ENCODE measurements at regions of chr19 and their contacts with region 1.

Region 1: DNA sequence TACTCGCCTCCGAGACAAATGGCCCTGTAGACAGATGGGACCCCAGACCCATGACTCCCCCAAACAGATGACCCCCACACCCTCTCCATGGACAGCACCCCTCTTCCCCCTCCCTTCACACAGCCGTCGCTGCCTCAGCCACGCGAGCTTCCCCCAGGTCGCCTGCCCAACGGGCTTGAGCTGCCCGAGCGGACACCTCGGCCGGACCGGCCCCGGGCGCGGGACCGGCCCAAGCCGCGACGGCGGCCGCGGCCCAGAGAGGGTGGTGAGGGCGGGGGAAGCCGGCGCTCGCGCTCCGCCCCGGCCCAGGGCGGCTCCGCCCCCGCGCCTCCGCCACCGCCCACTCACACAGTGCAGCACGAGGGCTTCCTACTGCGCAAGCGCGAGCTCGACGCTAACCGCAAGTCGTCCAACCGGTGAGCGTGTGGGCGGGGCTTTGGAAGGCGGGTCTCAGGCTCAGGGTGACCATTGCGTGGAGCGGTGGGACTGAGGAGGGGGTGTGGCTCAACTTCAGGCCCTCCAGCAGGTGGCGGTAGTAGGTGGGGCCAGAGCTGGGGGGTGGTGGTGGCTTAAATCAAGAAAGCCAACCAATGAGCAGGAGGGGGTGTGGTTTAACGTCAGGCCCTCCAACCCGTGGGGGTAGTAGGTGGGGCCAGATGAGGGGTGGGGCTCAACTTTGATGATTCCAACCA is 6.2 kb upstream of the SHKBP1 start:
- DNase-seq: peak; percentile 86 to 100 (median 94)
- ATAC-seq: peak; percentile 93
- H3K4me3 ChIP-seq: peak overlapping the region; percentile 34 to 51
- H3K4me3 Mint-ChIP-seq: peak overlapping the region; percentile 72
- H3K27ac ChIP-seq: peak overlapping the region in 1 of 2 experiments; percentile 56
- H3K27ac Mint-ChIP-seq: peak overlapping the region; percentile 67
- H3K4me1 ChIP-seq: peaks cover 18% of the 10 kb centered on the region
- H3K4me1 Mint-ChIP-seq: peaks cover 13% of the 10 kb centered on the region
- H3K27me3 ChIP-seq: peaks cover 6 to 9% of the 10 kb centered on the region in 2 experiments
- H3K27me3 Mint-ChIP-seq: peaks cover 11% of the 10 kb centered on the region
- CTCF ChIP-seq: no peak

Region 2: GRCh38 chr19:40549007-40549708 is 21.3 kb before region 1 on chr19:
- CTCF ChIA-PET with region 1: interaction called, 15 read pairs
- POLR2A ChIA-PET with region 1: no interaction called
- intact Hi-C with region 1: no loop called
- DNase-seq: peak; percentile 44 to 82 (median 74)
- ATAC-seq: peak; percentile 92
- H3K4me3 ChIP-seq: no peak overlapping the region
- H3K4me3 Mint-ChIP-seq: peak overlapping the region; percentile 22
- H3K27ac ChIP-seq: no peak overlapping the region
- H3K27ac Mint-ChIP-seq: no peak overlapping the region
- H3K4me1 ChIP-seq: peaks cover 4% of the 10 kb centered on the region
- H3K4me1 Mint-ChIP-seq: peaks cover 9% of the 10 kb centered on the region
- H3K27me3 ChIP-seq: peaks cover 16 to 26% of the 10 kb centered on the region in 2 experiments
- H3K27me3 Mint-ChIP-seq: peaks cover 57% of the 10 kb centered on the region
- CTCF ChIP-seq: peak; percentile 55

Region 3: GRCh38 chr19:40690693-40691420 is 120.4 kb after region 1 on chr19:
- CTCF ChIA-PET with region 1: no interaction called
- POLR2A ChIA-PET with region 1: no interaction called
- intact Hi-C with region 1: no loop called
- DNase-seq: peak; percentile 67 to 93 (median 85)
- ATAC-seq: peak; percentile 88
- H3K4me3 ChIP-seq: peak overlapping the region; percentile 65 to 76
- H3K4me3 Mint-ChIP-seq: peak overlapping the region; percentile 88
- H3K27ac ChIP-seq: peak overlapping the region in 1 of 2 experiments; percentile 40
- H3K27ac Mint-ChIP-seq: peak overlapping the region; percentile 75
- H3K4me1 ChIP-seq: peaks cover 23% of the 10 kb centered on the region
- H3K4me1 Mint-ChIP-seq: peaks cover 7% of the 10 kb centered on the region
- H3K27me3 ChIP-seq: peaks cover 0 to 3% of the 10 kb centered on the region in 2 experiments
- H3K27me3 Mint-ChIP-seq: no peaks in the 10 kb centered on the region
- CTCF ChIP-seq: no peak